Sigmoid colon (tissue), 7 donors: ENCODE measurements at regions of chr1 and their contacts with region 1.

Region 1: DNA sequence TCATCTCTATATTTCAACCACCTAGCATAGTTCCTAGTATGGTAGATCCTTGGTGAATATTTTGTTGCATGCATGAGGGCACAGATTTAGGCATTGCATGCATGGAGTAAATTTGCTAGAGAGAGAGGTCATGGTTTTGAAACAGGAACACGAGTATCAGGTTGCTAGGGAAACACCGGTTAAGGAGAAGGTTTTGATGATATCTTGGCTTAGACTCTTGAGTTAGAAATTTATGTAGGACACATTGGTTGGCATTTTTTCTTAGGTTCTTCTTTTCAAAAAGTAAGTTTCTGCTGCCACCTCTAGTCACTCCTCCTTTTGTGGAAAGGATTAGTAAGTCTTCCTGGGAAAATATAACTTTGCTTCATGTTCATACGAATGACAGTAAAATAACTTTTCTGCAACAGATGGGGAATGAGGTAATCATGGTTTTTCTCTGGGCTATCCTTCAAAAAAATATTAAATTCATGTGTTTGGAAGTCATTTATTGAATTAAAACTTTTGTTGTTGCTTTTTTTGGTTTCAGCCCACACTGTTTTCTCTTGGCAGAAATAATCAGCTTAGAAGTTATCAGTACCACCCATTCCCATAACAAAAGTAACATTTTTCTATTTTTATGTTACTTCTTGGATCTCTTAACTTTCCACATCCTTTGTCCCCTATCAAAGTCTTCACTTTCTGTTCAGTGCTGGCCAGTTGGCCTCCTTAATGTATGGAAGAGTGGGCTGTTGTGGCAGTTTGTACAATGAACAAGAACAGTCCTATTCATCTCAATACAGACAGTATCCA is 97.3 kb downstream of the PLA2G4A start:
- DNase-seq: no peak
- H3K4me3 ChIP-seq: no peak overlapping the region
- H3K27ac ChIP-seq: peak overlapping the region in 1 of 4 donors; percentile 23
- H3K4me1 ChIP-seq: peaks cover 0 to 27% (median 18%) of the 10 kb centered on the region in 4 donors
- H3K27me3 ChIP-seq: no peaks in the 10 kb centered on the region
- CTCF ChIP-seq: no peak
- EP300 ChIP-seq: no peak
- POLR2A ChIP-seq: no peak

Region 2: DNA sequence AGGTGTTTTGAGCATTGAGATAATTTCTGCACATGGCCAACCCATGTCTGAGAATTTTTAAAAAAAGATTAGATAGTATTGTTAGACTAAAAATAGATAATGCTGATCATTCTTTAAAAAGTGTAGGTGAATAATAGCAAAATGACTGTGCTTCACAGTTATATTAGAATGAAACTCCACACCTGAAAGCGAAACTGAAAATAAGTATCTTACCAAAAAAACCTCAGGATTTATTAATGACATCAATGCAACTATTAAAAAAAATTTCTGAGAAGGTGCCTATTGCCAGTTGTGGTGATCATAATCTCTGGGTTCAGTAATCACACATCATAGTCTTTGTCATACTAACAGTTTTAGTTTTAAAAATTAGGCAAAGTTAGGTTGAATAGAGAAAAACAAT is 60.8 kb before region 1 on chr1:
- intact Hi-C with region 1: no loop called
- DNase-seq: no peak
- H3K4me3 ChIP-seq: no peak overlapping the region
- H3K27ac ChIP-seq: no peak overlapping the region
- H3K4me1 ChIP-seq: peaks cover 0 to 20% (median 2%) of the 10 kb centered on the region in 4 donors
- H3K27me3 ChIP-seq: no peaks in the 10 kb centered on the region
- CTCF ChIP-seq: no peak
- EP300 ChIP-seq: no peak
- POLR2A ChIP-seq: no peak

Region 3: DNA sequence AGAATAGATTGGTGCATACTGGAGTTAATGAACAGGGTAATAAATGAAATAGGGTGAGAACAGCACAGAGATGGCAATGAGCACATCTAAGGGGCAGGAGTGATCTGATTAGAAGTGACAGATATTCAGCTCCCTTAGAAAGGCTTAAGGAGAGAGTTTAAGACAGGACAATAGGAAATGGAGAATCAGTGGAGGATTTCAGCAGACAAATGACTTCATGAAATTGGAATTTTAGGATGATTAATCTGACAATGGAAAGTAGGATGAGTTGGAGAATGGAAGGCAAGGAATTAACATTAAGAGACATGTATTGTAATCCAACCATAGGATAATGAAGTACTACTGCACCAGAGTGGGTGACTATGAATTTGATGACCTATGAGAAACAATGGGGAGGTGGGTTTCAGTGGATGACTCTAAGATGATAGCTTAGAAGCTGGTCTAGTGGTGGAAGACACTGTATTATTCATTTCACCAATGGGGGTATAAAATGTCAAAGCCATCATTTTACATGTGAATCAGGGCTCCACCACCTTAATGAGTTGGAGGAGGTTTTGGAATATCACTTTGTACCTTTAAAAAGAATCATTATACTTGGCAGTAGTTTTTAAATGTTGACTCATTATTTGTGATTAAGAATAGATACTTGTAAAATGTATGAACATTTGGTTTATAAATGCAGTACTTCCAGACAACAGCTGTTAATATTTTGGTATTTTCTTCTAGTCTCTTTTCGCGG is 41.8 kb after region 1 on chr1:
- intact Hi-C with region 1: loop called (anchors 5 kb)
- DNase-seq: no peak
- H3K4me3 ChIP-seq: no peak overlapping the region
- H3K27ac ChIP-seq: peak overlapping the region in 1 of 4 donors; percentile 17
- H3K4me1 ChIP-seq: peaks cover 0 to 8% (median 3%) of the 10 kb centered on the region in 4 donors
- H3K27me3 ChIP-seq: no peaks in the 10 kb centered on the region
- CTCF ChIP-seq: no peak
- EP300 ChIP-seq: no peak
- POLR2A ChIP-seq: no peak

Region 4: GRCh38 chr1:187051618-187052232 is 125.7 kb after region 1 on chr1:
- intact Hi-C with region 1: no loop called
- DNase-seq: no peak
- H3K4me3 ChIP-seq: no peak overlapping the region
- H3K27ac ChIP-seq: no peak overlapping the region
- H3K4me1 ChIP-seq: no peaks in the 10 kb centered on the region
- H3K27me3 ChIP-seq: no peaks in the 10 kb centered on the region
- CTCF ChIP-seq: peak in 1 of 4 experiments; percentile 13
- EP300 ChIP-seq: no peak
- POLR2A ChIP-seq: no peak